MCF 10A (cell line): ENCODE measurements at regions of chr16 and their contacts with region 1.

Region 1: GRCh38 chr16:47732523-47733111 is 271.5 kb downstream of the PHKB start:
- DNase-seq: peak; percentile 85
- H3K4me3 Mint-ChIP-seq: peak overlapping the region; percentile 14
- H3K27ac Mint-ChIP-seq: peak overlapping the region; percentile 77
- H3K4me1 Mint-ChIP-seq: peaks cover 28% of the 10 kb centered on the region
- H3K27me3 Mint-ChIP-seq: no peaks in the 10 kb centered on the region
- CTCF ChIP-seq: no peak

Region 2: GRCh38 chr16:47787696-47788095 is 55.1 kb after region 1 on chr16:
- CTCF ChIA-PET with region 1: no interaction called
- POLR2A ChIA-PET with region 1: no interaction called
- intact Hi-C with region 1: no loop called
- DNase-seq: peak; percentile 30
- H3K4me3 Mint-ChIP-seq: no peak overlapping the region
- H3K27ac Mint-ChIP-seq: no peak overlapping the region
- H3K4me1 Mint-ChIP-seq: no peaks in the 10 kb centered on the region
- H3K27me3 Mint-ChIP-seq: no peaks in the 10 kb centered on the region
- CTCF ChIP-seq: no peak

Region 3: DNA sequence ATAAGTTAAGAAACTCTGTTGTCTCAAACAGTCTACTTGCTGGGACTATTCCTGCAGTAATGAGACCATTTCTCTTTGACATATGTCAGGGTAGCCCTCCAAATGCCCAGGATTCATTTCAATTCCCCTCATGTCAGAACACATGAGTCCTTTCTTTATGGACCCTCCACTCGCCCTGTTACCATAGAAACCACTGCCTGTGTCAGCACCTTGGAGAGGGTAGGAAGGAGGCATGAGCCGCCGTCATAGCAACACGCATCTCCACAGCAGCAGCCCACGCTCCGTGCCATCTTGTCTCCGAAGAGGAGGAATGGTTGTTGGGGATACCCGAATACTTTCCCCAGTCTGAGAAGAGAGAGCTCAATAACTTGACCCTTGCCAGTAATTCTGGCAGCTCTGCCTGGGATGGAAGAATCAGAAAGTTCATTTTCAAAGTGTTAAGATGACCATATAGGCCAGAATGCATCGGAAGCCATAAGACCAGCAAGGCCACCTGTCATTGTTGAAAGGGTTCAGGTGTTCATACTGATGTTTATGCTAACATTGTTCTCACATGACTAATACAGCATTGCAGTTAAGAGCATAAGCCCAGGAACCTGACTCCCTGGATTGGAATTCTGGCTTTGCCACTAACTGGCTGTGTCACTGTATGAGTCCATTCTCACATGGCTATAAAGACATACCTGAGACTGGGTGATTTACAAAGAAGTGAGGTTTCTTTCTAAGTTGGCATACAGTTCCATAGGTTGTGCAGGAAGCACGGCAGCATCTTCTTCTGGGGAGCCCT is 281.9 kb after region 1 on chr16:
- CTCF ChIA-PET with region 1: no interaction called
- POLR2A ChIA-PET with region 1: no interaction called
- intact Hi-C with region 1: no loop called
- DNase-seq: peak; percentile 88
- H3K4me3 Mint-ChIP-seq: no peak overlapping the region
- H3K27ac Mint-ChIP-seq: peak overlapping the region; percentile 80
- H3K4me1 Mint-ChIP-seq: peaks cover 17% of the 10 kb centered on the region
- H3K27me3 Mint-ChIP-seq: no peaks in the 10 kb centered on the region
- CTCF ChIP-seq: no peak

Region 4: DNA sequence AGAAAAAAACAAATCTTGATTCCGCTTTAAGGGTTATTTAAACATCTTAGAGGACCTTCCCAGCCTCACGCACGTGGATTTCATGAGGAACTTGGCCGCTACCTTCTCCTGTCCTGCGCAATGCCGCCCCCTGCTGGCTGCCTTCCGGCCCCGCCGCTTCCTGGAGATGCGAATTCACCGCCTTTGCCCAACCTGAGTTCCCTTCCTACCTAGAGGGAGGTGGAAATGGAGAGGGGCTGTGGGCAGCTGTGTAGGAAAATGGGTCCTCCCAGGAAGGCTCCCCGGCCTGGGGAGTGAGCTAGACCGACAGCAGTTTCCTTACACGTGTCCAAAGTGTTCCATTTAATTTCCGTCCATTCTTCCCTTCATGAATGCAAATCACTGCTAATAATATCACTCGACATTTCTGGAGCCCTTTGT is 424.2 kb after region 1 on chr16:
- CTCF ChIA-PET with region 1: no interaction called
- POLR2A ChIA-PET with region 1: no interaction called
- intact Hi-C with region 1: loop called (anchors 10 kb)
- DNase-seq: peak; percentile 78
- H3K4me3 Mint-ChIP-seq: no peak overlapping the region
- H3K27ac Mint-ChIP-seq: no peak overlapping the region
- H3K4me1 Mint-ChIP-seq: peaks cover 10% of the 10 kb centered on the region
- H3K27me3 Mint-ChIP-seq: no peaks in the 10 kb centered on the region
- CTCF ChIP-seq: peak; percentile 96